ENCODE measurements at regions of chr3 and their contacts with region 1.

Region 1: DNA sequence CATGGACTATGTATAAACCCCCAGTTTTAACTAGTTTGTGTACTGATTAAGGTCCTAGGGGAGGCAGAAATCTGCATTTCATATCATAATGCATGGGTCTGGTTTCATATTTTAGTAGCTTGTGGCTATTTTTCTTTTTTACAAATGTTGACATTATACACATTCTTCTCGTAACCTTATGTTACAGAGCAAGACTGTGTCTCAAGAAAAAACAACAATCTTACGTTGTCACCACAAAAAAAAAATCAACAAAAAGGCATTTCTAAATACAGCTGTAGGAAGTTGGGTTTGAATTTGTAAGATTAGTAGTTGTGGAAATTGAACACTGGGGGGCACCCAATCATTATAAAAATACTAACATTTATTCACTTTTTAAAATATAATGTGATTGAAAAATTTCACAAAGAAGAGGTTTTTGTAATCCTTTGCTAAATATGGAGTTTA is 17.9 kb downstream of the SERP1 start:
- DNase-seq: peak; percentile 52
- ATAC-seq: peak; percentile 63
- H3K4me3 ChIP-seq: no peak overlapping the region
- H3K27ac ChIP-seq: no peak overlapping the region
- H3K4me1 ChIP-seq: no peaks in the 10 kb centered on the region
- H3K27me3 ChIP-seq: no peaks in the 10 kb centered on the region
- CTCF ChIP-seq: peak; percentile 51
- POLR2A ChIP-seq: no peak
- RAD21 ChIP-seq: peak; percentile 48

Region 2: GRCh38 chr3:149366941-149367840 is 1161.2 kb before region 1 on chr3:
- CTCF ChIA-PET with region 1: no interaction called
- POLR2A ChIA-PET with region 1: no interaction called
- dilution Hi-C with region 1: no loop called
- in situ Hi-C with region 1: no loop called
- intact Hi-C with region 1: no loop called
- DNase-seq: peak; percentile 76
- ATAC-seq: peak; percentile 21
- H3K4me3 ChIP-seq: no peak overlapping the region
- H3K27ac ChIP-seq: no peak overlapping the region
- H3K4me1 ChIP-seq: peaks cover 13% of the 10 kb centered on the region
- H3K27me3 ChIP-seq: no peaks in the 10 kb centered on the region
- CTCF ChIP-seq: no peak
- POLR2A ChIP-seq: peak; percentile 83
- RAD21 ChIP-seq: no peak

Region 3: DNA sequence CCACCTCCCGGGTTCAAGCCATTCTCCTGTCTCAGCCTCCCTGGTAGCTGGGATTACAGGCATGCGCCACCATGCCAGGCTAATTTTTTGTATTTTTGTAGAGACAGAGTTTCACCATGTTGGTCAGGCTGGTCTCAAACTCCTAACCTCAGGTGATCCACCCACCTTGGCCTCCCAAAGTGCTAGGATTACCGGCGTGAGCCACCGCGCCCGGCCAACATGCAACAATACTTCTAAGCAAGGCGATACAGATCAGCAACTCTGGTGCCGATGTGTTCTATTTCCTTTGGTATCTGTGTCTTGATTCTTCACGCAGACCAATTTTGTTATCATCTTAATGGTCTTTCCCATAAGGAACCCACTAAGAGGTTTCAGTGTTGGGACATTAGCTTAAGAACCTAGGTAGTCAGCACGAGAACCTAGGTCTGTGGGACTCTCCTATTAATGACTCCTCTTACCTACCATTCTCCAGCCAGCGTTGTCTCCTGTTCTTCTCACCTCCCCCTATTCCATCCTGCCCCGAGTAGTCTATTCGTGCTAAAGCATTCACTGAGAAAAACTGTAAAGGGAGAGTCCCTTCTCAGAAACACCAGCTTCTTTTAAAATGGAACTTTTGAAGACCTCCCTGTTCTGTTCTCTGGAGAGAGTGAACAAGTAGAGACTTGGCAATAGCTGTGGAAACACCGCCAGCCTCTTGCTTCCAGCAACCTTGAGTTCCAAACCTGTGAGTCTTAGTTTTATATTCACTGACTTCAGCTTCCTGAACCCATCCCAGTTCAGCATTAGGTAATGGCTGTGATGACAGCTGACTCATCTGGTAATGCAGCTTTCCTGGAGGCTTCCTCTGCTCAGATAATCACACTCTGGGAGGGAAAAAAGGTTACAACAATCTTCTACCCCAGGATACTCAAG is 59.1 kb before region 1 on chr3:
- CTCF ChIA-PET with region 1: no interaction called
- POLR2A ChIA-PET with region 1: no interaction called
- dilution Hi-C with region 1: no loop called
- in situ Hi-C with region 1: no loop called
- intact Hi-C with region 1: loop called (anchors 10 kb)
- DNase-seq: peak; percentile 98
- ATAC-seq: peak; percentile 93
- H3K4me3 ChIP-seq: no peak overlapping the region
- H3K27ac ChIP-seq: peak overlapping the region; percentile 47
- H3K4me1 ChIP-seq: peaks cover 7% of the 10 kb centered on the region
- H3K27me3 ChIP-seq: no peaks in the 10 kb centered on the region
- CTCF ChIP-seq: no peak
- POLR2A ChIP-seq: peak; percentile 33; the same call in 1 of the 2 replicates
- RAD21 ChIP-seq: no peak

Measured in IMR-90 (cell line).